Cardiac septum (tissue), 1 donor: ENCODE measurements at regions of chr17 and their contacts with region 1.

Region 1: GRCh38 chr17:10618202-10618635 is 38.9 kb downstream of the MYH3 start:
- DNase-seq: no peak

Region 2: DNA sequence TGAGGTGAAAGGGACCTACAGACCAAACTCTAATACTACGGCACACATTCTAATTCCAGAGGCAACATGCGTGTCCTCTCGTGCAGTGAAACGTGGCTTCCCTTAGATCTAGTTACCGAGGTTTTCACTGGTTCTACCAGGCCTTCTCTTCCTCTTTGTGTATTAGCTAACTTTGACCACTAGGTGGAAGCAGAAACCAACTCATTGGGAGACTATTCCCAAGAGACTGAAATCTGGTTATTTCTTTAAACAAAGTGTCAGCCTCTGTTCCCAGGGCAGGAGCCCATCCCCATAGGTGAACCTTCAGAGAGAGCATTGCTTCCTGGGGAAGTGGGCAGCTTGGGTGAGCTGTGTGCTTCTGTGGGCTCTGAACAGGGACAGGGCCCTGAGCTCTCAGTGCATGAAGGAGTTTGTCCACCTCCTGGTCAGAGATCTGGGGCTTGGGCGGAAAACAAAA is 693.5 kb before region 1 on chr17:
- intact Hi-C with region 1: loop called (anchors 5 kb)
- DNase-seq: no peak

Region 3: DNA sequence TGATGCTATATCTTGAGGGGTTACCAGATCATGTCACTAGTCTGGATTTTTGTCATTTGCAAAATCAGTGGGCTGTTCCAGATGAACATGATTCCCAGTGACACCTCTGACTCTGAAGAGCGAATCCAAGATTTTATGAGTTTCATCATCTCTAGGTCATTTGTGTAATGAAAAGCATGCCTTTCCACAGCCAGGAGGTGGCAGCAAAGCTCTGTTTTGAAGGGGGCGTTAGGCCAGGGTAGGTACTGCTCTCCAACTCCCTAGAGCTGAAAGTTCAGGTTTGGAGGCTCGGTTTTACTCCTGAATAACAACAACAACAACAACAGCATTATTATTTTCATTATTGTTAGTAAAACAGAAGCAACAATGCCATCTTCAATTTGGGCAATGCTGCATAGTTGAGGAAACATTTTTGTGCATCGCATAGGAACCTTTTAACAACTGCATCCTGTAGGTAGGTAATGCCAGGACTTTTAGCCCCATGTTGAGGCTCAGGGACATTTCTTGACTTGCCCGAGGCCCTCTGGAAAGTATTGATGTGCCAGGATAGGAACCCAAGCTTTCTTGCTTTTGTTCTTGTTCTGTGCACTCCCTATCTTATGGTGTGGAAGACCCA is 322.4 kb before region 1 on chr17:
- intact Hi-C with region 1: loop called (anchors 10 kb)
- DNase-seq: no peak

Region 4: DNA sequence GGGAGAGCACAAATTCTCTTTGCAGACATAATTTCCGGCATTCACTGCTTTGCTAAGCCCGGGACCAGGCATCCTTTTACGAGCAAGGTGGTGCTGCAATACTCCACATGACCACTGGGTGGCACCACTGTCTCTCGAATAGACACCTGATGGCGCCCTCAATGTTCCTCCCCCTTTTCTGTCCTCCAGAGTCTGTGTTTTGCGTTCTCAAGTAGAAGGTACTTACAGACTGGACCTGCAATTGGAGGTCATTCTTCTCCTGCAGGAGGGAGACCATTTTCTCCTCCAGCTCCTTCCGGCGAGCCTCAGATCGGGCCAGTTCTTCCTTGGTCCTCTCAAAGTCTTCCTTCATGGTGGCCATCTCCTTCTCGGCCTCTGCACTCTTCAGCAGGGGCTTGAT is 290.6 kb before region 1 on chr17:
- intact Hi-C with region 1: loop called (anchors 1 kb)
- DNase-seq: no peak